Activated B cell treated with CpG ODN at 0.5 μM for 24 hours (primary cell): ENCODE measurements at regions of chr16 and their contacts with region 1.

Region 1: GRCh38 chr16:19502395-19503131 is 19.3 kb downstream of the GDE1 start:
- DNase-seq: peak; percentile 34
- ATAC-seq: peak; percentile 56
- H3K4me3 Mint-ChIP-seq: no peak overlapping the region
- H3K27ac Mint-ChIP-seq: no peak overlapping the region
- H3K4me1 Mint-ChIP-seq: no peaks in the 10 kb centered on the region
- H3K27me3 Mint-ChIP-seq: no peaks in the 10 kb centered on the region
- CTCF ChIP-seq: peak; percentile 51

Region 2: DNA sequence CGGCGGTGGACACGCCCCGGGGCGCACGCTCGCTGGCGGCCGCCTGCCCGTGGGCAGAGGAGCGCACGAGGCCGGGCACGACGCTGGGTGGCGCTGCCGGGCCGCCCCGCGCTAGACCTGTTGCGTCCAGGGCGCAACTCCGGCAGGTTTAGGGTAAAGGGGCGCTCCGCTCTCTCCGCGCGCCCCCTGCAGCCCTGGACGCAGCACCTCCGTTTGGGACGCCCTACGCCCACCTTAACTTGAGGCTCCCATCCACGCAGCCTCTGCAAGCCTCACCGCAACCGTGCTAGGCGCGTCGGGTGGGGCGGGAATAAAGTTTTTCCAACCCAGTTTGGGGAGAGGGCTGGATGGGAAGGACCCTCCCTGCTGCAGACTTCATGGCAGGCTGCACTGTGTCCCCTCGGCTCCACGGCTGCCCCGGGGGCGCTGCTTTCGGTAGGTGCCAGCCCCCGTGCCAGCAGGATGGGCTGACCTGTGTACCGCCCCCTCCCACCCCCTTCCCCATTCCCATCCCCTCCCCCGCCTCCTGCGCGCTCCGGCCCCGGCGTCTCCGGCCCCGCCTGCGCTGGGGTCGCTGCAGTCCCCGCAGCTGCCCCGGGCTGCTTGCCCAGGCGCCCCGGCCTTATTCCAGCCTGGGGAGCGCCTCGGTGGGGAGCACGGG is 334.7 kb before region 1 on chr16 and contains the start of gene SYT17:
- CTCF ChIA-PET with region 1: no interaction called
- POLR2A ChIA-PET with region 1: no interaction called
- intact Hi-C with region 1: loop called (anchors 1 kb)
- DNase-seq: peak; percentile 69
- ATAC-seq: peak; percentile 92
- H3K4me3 Mint-ChIP-seq: peak within 1 kb of the TSS; percentile 82
- H3K27ac Mint-ChIP-seq: no peak within 1 kb of the TSS
- H3K4me1 Mint-ChIP-seq: peaks cover 24% of the 10 kb centered on the region
- H3K27me3 Mint-ChIP-seq: no peaks in the 10 kb centered on the region
- CTCF ChIP-seq: no peak
- total RNA-seq, gene SYT17: 21.2 and 25.4 TPM in 2 replicates

Region 3: GRCh38 chr16:19375561-19376158 is 126.9 kb before region 1 on chr16:
- CTCF ChIA-PET with region 1: no interaction called
- POLR2A ChIA-PET with region 1: no interaction called
- intact Hi-C with region 1: loop called (anchors 1 kb)
- DNase-seq: no peak
- ATAC-seq: peak; percentile 83
- H3K4me3 Mint-ChIP-seq: no peak overlapping the region
- H3K27ac Mint-ChIP-seq: no peak overlapping the region
- H3K4me1 Mint-ChIP-seq: no peaks in the 10 kb centered on the region
- H3K27me3 Mint-ChIP-seq: no peaks in the 10 kb centered on the region
- CTCF ChIP-seq: peak; percentile 97

Region 4: DNA sequence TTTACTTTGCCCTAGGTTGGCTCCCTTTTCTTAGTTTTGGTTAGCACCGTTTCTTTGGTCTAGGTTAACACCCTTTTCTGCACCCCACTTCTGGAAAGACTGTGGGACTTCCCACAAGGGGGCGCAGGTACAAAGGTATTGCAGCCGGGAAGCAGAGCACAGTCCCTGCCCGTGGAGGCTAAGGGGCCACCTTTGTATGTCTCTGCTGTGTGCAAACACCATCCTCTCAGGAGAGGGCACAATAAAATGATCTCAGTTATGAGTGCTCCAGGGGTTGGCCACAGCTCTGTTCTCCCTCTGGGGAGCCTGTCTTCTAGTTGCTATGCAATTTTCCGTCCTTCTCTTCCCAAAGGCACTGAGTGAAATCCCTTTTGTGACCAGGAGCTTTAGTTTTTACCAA is 113.3 kb before region 1 on chr16:
- CTCF ChIA-PET with region 1: interaction called, 59 read pairs
- POLR2A ChIA-PET with region 1: no interaction called
- intact Hi-C with region 1: loop called (anchors 1 kb)
- DNase-seq: peak; percentile 22
- ATAC-seq: peak; percentile 61
- H3K4me3 Mint-ChIP-seq: no peak overlapping the region
- H3K27ac Mint-ChIP-seq: no peak overlapping the region
- H3K4me1 Mint-ChIP-seq: no peaks in the 10 kb centered on the region
- H3K27me3 Mint-ChIP-seq: peaks cover 29% of the 10 kb centered on the region
- CTCF ChIP-seq: no peak